IMR-90 (cell line): ENCODE measurements at regions of chr5 and their contacts with region 1.

Region 1: GRCh38 chr5:83864652-83865051 is 144.0 kb upstream of the HAPLN1 start:
- DNase-seq: no peak
- ATAC-seq: no peak
- H3K4me3 ChIP-seq: no peak overlapping the region
- H3K27ac ChIP-seq: no peak overlapping the region
- H3K4me1 ChIP-seq: no peaks in the 10 kb centered on the region
- H3K27me3 ChIP-seq: no peaks in the 10 kb centered on the region
- CTCF ChIP-seq: no peak
- POLR2A ChIP-seq: no peak
- RAD21 ChIP-seq: no peak

Region 2: DNA sequence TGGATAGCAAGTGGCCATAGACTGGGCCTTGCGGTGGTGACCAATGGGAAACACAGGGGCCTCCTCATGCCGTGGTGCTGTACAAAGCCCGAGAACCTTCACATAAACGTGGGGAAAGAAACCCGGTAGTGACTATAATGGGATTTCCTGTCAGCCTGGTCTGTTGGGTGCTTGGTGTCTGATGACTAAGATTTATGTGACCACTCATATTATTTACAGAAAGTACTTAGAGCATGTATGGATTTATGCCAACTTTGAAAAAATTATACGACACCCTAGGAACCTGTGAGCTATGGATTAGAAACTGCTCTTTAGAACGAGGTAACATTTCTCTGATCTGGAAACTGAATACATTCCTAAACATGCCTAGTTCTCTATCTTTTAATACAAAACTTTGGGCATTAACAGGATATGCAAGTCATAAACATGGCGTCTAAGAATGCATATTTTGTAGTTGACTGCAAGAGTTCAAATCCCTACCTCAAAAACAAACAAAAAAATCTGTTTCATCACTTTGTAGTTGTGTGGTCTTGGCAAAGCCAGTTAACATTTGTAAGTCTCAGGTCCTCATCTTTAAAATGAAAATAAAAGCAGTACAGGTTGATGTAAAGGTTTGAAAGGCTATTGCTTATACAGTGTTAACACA is 872.9 kb before region 1 on chr5:
- CTCF ChIA-PET with region 1: no interaction called
- POLR2A ChIA-PET with region 1: no interaction called
- dilution Hi-C with region 1: no loop called
- in situ Hi-C with region 1: no loop called
- intact Hi-C with region 1: no loop called
- DNase-seq: peak; percentile 38
- ATAC-seq: peak; percentile 24
- H3K4me3 ChIP-seq: no peak overlapping the region
- H3K27ac ChIP-seq: no peak overlapping the region
- H3K4me1 ChIP-seq: no peaks in the 10 kb centered on the region
- H3K27me3 ChIP-seq: no peaks in the 10 kb centered on the region
- CTCF ChIP-seq: no peak
- POLR2A ChIP-seq: no peak
- RAD21 ChIP-seq: no peak

Region 3: GRCh38 chr5:84301535-84301934 is 436.9 kb after region 1 on chr5:
- CTCF ChIA-PET with region 1: interaction called, 11 read pairs
- POLR2A ChIA-PET with region 1: no interaction called
- dilution Hi-C with region 1: no loop called
- in situ Hi-C with region 1: no loop called
- intact Hi-C with region 1: no loop called
- DNase-seq: peak; percentile 56
- ATAC-seq: peak; percentile 87
- H3K4me3 ChIP-seq: no peak overlapping the region
- H3K27ac ChIP-seq: no peak overlapping the region
- H3K4me1 ChIP-seq: no peaks in the 10 kb centered on the region
- H3K27me3 ChIP-seq: no peaks in the 10 kb centered on the region
- CTCF ChIP-seq: no peak
- POLR2A ChIP-seq: no peak
- RAD21 ChIP-seq: no peak